Right cardiac atrium (tissue), 5 donors: ENCODE measurements at regions of chr10 and their contacts with region 1.

Region 1: DNA sequence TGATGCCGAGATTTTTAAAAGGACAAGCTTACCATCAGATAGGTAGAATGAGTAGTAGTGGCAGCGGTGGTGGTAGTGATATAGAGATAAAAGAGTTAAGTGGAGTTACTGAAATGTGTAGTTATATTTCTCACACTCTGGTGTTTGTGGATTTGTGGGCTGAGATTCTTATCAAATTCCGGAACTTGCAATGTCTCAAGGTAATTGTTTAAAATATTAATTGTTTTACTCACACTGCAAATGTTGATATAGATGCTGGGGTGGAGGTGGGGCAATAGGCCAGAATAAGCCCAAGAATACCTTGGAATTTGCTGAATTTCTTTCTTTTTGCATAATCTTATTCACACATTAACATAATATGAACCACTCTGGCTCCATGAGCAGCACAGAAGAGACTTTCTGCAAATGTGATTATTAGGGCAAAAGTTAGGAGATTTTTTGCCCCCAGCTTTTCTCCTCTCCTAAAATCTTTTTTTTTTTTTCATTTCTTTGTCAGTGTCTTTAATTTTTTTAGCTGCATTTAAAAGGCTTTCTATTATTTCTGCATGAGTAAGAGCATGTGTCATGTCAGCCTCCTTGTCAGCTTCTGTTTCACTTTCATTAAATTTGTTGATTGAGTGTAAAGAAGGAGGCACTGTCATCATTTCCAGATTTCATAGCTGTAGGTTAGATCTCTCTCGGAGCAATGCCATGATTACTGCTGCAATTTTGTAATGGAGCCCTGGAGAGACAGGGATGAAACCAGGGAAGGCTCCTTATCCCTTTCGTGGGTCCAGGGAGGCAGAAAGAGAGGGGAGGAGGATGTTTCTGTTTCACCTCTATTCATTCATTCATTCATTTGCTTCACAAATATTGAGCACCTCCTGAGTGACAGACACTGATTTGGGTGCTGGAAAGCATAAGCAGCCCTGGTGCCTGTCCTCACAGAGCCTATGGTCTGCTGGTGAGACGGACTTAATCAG is 13.1 kb upstream of the SGMS1 start:
- DNase-seq: no peak
- ATAC-seq: no peak
- H3K4me3 ChIP-seq: no peak overlapping the region
- H3K27ac ChIP-seq: no peak overlapping the region
- H3K4me1 ChIP-seq: no peaks in the 10 kb centered on the region
- H3K27me3 ChIP-seq: no peaks in the 10 kb centered on the region

Region 2: DNA sequence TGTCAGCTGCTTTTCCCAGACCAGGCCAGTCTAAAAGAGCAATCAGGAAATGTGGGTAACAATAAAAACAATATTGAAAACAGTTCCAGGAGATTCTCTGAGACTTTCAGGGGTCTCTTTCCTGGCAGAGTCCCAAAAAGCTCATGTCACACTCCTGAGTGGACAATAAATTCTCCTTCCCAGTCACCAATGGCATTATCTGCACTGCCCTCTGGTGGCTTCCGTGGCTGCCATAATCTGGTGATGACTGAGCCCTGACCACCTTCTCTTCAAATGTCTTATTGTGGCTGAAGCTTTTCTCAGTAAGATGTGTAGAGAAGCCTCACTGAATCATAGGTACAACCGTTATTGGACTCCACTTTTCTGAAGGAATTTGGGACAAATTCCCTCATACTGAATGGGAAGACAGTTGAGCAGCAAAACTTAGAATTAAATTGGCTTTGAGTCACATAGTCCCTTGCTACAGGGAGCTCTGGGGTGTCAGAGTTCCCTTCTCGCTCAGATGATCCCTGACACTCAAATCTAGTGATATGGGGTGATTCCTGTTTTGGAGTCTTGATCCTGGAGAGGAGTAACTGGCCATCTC is 361.2 kb before region 1 on chr10:
- intact Hi-C with region 1: loop called in 1 of 4 experiments (anchors 10 kb)
- DNase-seq: peak; percentile 18 to 74 (median 63)
- ATAC-seq: no peak
- H3K4me3 ChIP-seq: no peak overlapping the region
- H3K27ac ChIP-seq: no peak overlapping the region
- H3K4me1 ChIP-seq: no peaks in the 10 kb centered on the region
- H3K27me3 ChIP-seq: no peaks in the 10 kb centered on the region